HepG2 (cell line): ENCODE measurements at regions of chr12 and their contacts with region 1.

Region 1: GRCh38 chr12:50411051-50411660 is 10.5 kb downstream of the LARP4 start:
- DNase-seq: no peak
- ATAC-seq: no peak
- H3K4me3 ChIP-seq: no peak overlapping the region
- H3K27ac ChIP-seq: no peak overlapping the region
- H3K4me1 ChIP-seq: no peaks in the 10 kb centered on the region
- H3K27me3 ChIP-seq: no peaks in the 10 kb centered on the region
- CTCF ChIP-seq: no peak
- EP300 ChIP-seq: no peak
- POLR2A ChIP-seq: no peak
- RAD21 ChIP-seq: no peak

Region 2: DNA sequence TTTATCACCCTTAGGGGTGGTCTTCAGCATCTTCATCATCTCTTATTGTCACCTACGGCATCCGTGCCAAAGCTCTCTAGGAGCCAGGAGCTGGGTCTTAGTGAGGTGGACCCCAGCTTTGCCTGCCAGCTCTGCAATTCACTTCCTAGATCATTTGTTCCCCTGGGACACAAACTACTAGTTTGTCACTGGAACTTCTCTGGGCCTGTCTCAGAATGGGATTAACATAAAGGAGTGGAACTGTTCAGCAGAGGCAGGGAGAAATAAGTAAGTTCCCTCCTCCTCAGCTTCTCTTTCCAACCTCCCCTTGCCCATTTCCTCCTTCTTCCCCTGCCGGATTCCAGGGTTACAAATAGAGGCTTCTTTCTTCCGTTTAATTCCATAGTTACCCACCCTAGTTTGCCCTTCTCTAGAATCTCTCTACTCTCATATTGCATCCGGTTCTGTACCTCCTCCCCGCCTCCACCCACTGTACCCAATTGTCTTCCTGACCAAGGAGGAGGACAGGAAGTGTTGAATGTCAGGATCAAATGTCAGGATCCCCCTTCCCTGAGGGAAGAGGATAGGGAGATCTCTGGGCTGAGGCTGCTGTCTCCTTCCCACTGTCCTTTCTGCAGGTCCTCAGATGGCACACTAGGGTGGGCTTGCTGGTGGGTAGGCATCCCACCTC is 14.6 kb after region 1 on chr12:
- CTCF ChIA-PET with region 1: no interaction called
- POLR2A ChIA-PET with region 1: no interaction called
- in situ Hi-C with region 1: no loop called
- intact Hi-C with region 1: loop called (anchors 1 kb)
- DNase-seq: no peak
- ATAC-seq: no peak; the same call in 2 of the 3 replicates
- H3K4me3 ChIP-seq: no peak overlapping the region
- H3K27ac ChIP-seq: no peak overlapping the region
- H3K4me1 ChIP-seq: no peaks in the 10 kb centered on the region
- H3K27me3 ChIP-seq: no peaks in the 10 kb centered on the region
- CTCF ChIP-seq: no peak
- EP300 ChIP-seq: no peak
- POLR2A ChIP-seq: no peak
- RAD21 ChIP-seq: no peak